Left colon (tissue), 2 donors: ENCODE measurements at regions of chr1 and their contacts with region 1.

Region 1: GRCh38 chr1:93629099-93630059 is 52.3 kb downstream of the BCAR3 start:
- DNase-seq: peak in 1 of 2 donors; percentile 25
- ATAC-seq: peak; percentile 76

Region 2: GRCh38 chr1:93447516-93448291 is 181.7 kb before region 1 on chr1 and contains the start of gene FNBP1L:
- intact Hi-C with region 1: loop called in 1 of 2 experiments (anchors 10 kb)
- DNase-seq: peak; percentile 79 to 85
- ATAC-seq: peak; percentile 77
- total RNA-seq, gene FNBP1L: 46.7 to 64.2 TPM

Region 3: GRCh38 chr1:93680757-93681550 is 51.6 kb after region 1 on chr1:
- intact Hi-C with region 1: loop called in 1 of 2 experiments (anchors 10 kb)
- DNase-seq: peak; percentile 84 to 89
- ATAC-seq: peak; percentile 95

Region 4: GRCh38 chr1:93749894-93750301 is 120.5 kb after region 1 on chr1:
- intact Hi-C with region 1: no loop called
- DNase-seq: peak in 1 of 2 donors; percentile 16
- ATAC-seq: peak; percentile 73

Region 5: DNA sequence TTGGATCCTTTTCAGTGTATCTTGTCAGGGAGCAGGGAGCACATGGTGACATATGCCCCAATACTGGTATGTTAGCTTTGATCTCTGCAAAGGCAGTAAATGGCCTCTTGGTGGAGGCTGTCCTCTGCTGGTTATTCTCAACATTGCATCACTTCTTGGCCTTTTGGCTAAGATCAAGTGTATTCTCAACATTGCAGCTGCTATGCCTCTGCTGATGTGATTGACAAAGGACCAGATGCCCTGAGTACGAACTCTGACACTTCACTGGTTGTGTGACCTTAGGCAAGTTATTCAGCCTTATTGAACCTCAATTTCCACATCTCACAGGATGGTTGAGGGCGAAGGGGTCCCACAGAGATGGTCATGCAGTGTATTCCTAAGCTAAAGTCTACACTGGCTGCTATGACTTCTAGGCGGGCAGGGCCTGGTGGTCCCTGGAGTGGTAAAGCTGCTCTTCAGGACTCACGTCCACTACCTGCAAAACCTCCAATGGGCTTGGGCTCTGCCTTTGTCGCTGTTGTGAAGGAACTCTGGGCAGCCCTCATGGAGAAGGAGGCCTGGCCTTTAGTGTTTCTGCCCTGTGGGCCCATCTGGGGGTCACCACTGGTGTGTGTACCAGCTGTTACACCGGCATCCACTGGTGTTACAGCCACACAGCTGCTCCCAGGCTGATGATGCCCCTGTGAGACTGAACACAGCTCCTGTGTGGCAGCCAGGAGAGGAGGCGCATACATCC is 184.8 kb after region 1 on chr1:
- intact Hi-C with region 1: loop called (anchors 2 to 10 kb)
- DNase-seq: peak; percentile 30 to 57
- ATAC-seq: peak; percentile 95

Region 6: DNA sequence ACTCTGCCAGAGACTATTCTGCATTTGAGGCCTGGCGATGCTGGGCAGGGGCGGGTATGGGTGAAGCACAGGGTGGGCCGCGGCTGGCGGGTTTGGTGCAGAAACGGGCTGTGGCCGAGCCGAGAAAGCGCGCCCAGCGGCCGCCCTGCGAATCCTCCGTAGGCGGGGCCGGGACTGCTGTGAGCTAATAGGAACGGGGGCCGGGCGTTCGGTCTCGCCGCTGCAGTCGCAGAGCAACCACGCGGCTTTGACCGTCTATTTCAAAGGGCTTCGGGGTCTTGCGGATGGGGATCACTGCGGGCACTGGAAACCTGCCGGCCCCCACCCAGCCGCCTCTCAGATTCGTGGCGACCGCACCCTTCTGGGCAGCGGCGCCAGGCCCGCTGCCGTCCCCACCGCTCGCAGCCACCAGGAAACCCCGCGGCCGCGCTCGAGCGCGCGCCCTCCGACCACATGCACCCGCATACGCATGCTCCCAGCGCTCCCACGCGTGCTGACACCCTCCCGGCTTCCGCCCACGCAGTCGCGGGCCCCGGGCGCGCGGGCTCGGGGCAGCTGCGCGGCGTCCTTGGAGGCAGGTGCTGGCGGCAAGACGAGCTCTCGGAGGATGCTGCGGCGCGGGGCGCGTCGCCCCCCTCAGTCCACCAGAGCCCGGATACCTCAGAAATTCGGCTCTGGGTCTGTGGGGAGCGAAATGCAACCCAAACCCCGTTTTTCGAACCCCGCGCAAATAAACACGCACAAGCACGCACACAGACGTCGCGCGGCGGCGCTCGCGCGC is 217.0 kb after region 1 on chr1:
- intact Hi-C with region 1: loop called in 1 of 2 experiments (anchors 10 kb)
- DNase-seq: peak; percentile 88 to 95
- ATAC-seq: peak; percentile 70

Region 7: DNA sequence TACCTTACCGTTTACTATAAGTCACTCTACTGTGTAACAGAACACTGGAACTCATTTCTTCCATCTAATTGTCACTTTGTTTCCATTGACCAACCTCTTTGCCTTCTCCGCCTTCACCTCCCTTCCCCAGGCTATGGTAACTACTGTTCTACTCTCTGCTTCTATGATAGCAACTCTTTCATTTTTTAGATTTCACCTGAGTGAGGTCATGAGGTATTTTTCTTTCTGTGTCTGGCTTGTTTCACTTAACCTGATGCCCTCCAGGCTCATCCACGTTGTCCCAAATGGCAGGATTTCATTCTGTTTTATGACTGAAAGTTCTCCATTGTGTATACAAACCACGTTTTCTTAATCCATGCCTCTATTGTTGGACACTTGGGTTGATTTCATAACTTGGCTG is 315.3 kb after region 1 on chr1:
- intact Hi-C with region 1: no loop called
- DNase-seq: no peak
- ATAC-seq: no peak